ENCODE measurements at regions of chr12 and their contacts with region 1.

Region 1: DNA sequence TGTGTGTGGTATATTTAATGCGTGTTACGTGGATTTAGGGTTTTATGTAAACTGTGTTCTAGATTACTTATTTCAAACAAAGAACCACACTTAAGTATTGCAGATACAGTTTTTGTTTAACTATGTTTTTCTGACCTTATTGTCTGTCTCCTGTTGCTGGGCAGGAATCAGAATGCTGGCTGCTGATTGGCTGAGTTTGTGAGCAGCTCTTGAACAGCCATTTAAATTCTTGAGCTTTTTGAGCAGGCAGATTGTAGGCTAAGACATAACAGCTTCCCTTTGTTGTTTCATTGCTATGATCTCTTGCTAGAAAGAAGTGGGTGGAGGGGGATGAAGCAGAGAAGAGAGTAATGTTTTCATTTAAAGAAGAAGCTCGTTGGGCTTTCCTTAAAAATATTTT is 52.2 kb downstream of the ATF7IP start:
- DNase-seq: peak; percentile 42

Region 2: DNA sequence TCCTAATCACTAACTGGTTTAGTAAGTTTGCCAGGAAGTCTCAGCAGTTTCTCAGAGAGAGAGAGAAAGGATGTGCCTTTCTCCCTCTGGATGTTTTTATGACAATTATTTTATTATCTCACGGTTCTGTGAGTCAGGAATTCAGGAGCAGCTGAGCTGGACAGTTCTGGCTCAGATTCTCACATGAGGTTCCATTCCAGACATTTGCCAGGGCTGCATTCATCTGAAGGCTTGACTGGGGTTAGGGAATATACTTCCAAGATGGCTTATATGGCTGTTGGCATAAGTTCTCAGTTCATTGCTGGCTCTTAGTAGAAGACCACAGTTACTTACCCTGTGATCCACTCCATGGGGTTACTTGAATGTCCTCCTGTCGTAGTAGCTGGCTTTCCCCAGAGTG is 153.4 kb before region 1 on chr12:
- CTCF ChIA-PET with region 1: interaction called, 10 read pairs
- POLR2A ChIA-PET with region 1: no interaction called
- DNase-seq: no peak